Endothelial cell of umbilical vein (primary cell): ENCODE measurements at regions of chr2 and their contacts with region 1.

Region 1: GRCh38 chr2:203814661-203815540 is 52.7 kb upstream of the CTLA4 start:
- DNase-seq: peak; percentile 78
- H3K4me3 ChIP-seq: no peak overlapping the region
- H3K27ac ChIP-seq: no peak overlapping the region
- H3K4me1 ChIP-seq: peaks cover 38% of the 10 kb centered on the region
- H3K27me3 ChIP-seq: peaks cover 3 to 5% of the 10 kb centered on the region in 2 experiments
- CTCF ChIP-seq: peak; percentile 52 to 68
- POLR2A ChIP-seq: no peak

Region 2: DNA sequence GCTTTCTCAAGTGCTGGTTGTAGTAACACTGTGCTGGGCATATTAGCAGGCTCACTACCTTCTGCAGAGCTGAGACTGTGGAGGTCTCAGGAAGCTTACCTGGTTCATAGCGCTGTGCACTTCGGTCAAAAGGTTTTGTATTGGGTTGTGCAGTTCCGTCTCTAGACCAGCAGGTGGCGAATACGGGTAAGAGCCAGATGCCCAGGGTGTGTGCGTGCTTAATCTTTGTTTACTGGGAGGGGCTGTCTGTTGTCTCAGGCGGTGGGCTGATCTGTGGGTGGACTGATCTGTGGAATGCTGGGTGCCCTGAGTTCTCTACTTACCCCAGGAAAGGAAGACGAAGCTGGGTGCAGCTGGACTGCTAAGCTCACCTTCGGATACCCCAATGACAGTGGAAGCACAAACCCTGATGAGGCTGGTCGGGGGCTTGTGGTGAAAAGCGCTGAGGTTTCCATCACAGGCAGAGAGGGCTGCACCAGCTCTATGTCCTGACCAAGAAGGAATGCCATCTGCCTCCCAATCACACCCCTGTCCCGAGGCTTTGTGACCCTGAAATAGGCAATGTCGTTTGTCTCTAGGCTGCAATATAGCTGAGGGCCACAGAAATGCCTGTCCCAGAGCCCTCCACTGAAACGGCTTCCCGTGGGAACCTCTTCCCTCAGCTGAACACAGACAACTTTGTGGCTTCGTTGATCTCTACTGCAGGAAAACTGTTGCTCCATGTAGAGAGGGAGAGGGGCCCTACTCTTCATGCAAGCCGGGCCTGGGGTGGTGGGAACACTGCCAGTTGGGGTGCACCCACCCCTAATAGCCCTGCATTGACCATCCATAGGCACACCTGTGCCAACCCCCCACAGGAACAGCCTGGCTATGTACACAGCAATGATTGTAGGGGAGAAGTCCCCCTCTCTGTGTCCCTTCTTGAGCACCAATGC is 1226.0 kb before region 1 on chr2:
- CTCF ChIA-PET with region 1: interaction called, 47 read pairs
- POLR2A ChIA-PET with region 1: no interaction called
- dilution Hi-C with region 1: no loop called
- intact Hi-C with region 1: loop called (anchors 2 kb)
- DNase-seq: peak; percentile 68
- H3K4me3 ChIP-seq: no peak overlapping the region
- H3K27ac ChIP-seq: no peak overlapping the region
- H3K4me1 ChIP-seq: no peaks in the 10 kb centered on the region
- H3K27me3 ChIP-seq: no peaks in the 10 kb centered on the region
- CTCF ChIP-seq: peak; percentile 85 to 90
- POLR2A ChIP-seq: no peak

Region 3: DNA sequence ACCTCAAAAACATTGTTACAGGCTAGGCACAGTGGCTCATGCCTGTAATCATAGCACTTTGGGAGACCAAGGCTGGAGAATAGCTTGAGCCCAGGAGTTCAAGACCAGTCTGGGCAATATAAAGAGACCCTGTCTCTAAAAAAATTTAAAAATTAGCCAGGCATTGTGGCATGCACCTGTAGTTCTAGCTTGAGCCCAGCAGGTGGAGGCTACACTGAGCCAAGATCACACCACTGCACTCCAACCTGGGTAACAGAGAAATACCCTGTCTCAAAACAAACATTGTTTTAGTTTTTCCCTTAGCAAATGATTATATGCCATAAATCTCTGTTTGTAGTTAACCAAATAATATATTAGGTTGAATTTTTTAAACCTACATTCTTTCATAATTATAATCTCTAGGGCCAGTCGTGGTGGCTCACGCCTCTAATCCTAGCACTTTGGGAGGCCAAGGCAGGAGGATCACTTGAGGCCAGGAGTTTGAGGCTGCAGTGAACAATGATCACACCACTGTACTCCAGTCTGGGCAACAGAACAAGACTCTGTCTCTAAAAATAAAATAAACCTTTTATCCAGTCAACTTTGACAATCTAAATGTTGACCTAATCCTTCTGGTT is 589.4 kb before region 1 on chr2:
- CTCF ChIA-PET with region 1: interaction called, 41 read pairs
- POLR2A ChIA-PET with region 1: no interaction called
- dilution Hi-C with region 1: no loop called
- intact Hi-C with region 1: loop called (anchors 1 kb)
- DNase-seq: peak; percentile 32
- H3K4me3 ChIP-seq: no peak overlapping the region
- H3K27ac ChIP-seq: no peak overlapping the region
- H3K4me1 ChIP-seq: no peaks in the 10 kb centered on the region
- H3K27me3 ChIP-seq: no peaks in the 10 kb centered on the region
- CTCF ChIP-seq: peak; percentile 51 to 66
- POLR2A ChIP-seq: no peak

Region 4: DNA sequence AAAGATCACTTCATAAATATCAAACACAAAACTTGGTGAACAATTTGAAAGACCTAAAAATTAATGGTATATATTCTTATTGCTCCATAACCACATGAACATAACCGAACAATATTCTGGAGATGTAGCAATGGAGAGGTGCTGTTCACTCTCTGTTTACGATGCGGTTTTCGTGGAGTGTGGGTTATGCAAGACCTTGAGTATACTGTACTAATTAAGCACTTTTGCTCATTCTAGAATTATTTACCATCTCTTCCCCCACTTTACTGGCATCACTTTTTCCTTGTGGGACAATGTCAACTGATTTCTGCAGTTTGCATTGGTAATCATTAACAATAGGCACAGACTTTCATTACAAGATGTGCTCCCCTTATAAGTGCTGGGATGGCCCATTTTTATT is 377.4 kb before region 1 on chr2:
- CTCF ChIA-PET with region 1: interaction called, 10 read pairs
- POLR2A ChIA-PET with region 1: no interaction called
- dilution Hi-C with region 1: no loop called
- intact Hi-C with region 1: no loop called
- DNase-seq: no peak
- H3K4me3 ChIP-seq: no peak overlapping the region
- H3K27ac ChIP-seq: no peak overlapping the region
- H3K4me1 ChIP-seq: peaks cover 10% of the 10 kb centered on the region
- H3K27me3 ChIP-seq: no peaks in the 10 kb centered on the region
- CTCF ChIP-seq: no peak
- POLR2A ChIP-seq: no peak

Region 5: DNA sequence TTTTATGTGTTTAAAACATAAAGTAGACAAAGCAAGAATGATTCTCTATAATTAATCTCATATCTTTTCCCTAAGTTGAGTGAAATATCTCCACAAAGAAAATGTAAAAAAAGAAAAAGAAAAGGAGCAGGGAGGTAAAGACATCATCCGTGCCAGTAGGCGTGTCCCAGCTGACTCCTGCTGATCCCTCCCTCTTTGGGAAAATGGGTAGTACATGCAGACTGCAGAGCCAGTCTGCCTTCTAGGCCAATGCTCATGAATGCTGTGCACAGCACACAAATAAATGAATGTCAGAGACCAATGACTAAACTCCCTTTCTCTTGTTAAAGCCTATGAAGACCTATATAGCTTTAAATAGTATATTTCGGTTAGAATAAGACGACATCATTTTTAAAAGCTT is 344.5 kb before region 1 on chr2:
- CTCF ChIA-PET with region 1: interaction called, 19 read pairs
- POLR2A ChIA-PET with region 1: no interaction called
- dilution Hi-C with region 1: no loop called
- intact Hi-C with region 1: no loop called
- DNase-seq: no peak
- H3K4me3 ChIP-seq: no peak overlapping the region
- H3K27ac ChIP-seq: no peak overlapping the region
- H3K4me1 ChIP-seq: no peaks in the 10 kb centered on the region
- H3K27me3 ChIP-seq: no peaks in the 10 kb centered on the region
- CTCF ChIP-seq: no peak
- POLR2A ChIP-seq: no peak

Region 6: DNA sequence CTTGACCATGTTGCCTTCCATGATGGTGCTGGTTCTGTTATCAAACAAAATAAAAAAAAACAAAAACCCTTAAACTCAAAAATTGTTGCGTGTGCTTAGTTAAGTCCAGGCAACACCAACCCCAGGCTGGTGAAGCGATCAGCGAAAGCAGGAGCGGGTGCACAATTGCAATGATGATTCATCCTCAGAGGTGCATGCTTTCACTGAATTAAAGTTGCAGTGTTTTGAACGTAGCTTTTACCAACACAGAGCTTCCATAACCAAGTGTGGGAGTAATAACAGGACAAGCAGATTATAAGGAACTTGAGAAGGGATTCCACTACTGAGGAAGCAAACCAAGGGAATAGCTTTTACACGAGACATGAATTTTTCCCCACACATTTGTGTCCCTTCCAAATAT is 240.1 kb before region 1 on chr2:
- CTCF ChIA-PET with region 1: interaction called, 13 read pairs
- POLR2A ChIA-PET with region 1: no interaction called
- dilution Hi-C with region 1: no loop called
- intact Hi-C with region 1: no loop called
- DNase-seq: no peak
- H3K4me3 ChIP-seq: no peak overlapping the region
- H3K27ac ChIP-seq: no peak overlapping the region
- H3K4me1 ChIP-seq: no peaks in the 10 kb centered on the region
- H3K27me3 ChIP-seq: no peaks in the 10 kb centered on the region
- CTCF ChIP-seq: no peak
- POLR2A ChIP-seq: no peak

Region 7: GRCh38 chr2:203782262-203782976 is 32.5 kb before region 1 on chr2:
- CTCF ChIA-PET with region 1: interaction called, 20 read pairs
- POLR2A ChIA-PET with region 1: no interaction called
- dilution Hi-C with region 1: no loop called
- intact Hi-C with region 1: loop called (anchors 1 kb)
- DNase-seq: peak; percentile 90
- H3K4me3 ChIP-seq: no peak overlapping the region
- H3K27ac ChIP-seq: no peak overlapping the region
- H3K4me1 ChIP-seq: peaks cover 18% of the 10 kb centered on the region
- H3K27me3 ChIP-seq: no peaks in the 10 kb centered on the region
- CTCF ChIP-seq: peak; percentile 74 to 77
- POLR2A ChIP-seq: no peak